ENCODE measurements at regions of chr15 and their contacts with region 1.

Region 1: GRCh38 chr15:90265271-90266060 is at the start of gene NGRN:
- DNase-seq: peak; percentile 96
- ATAC-seq: peak; percentile 90
- H3K4me3 Mint-ChIP-seq: peak within 1 kb of the TSS; percentile 96
- H3K27ac Mint-ChIP-seq: peak within 1 kb of the TSS; percentile 98
- H3K4me1 Mint-ChIP-seq: peaks cover 42% of the 10 kb centered on the region
- H3K27me3 Mint-ChIP-seq: no peaks in the 10 kb centered on the region
- total RNA-seq, gene NGRN: 29.7 to 29.8 TPM

Region 2: GRCh38 chr15:90131848-90132247 is 133.6 kb before region 1 on chr15:
- CTCF ChIA-PET with region 1: no interaction called
- POLR2A ChIA-PET with region 1: no interaction called
- DNase-seq: no peak
- ATAC-seq: no peak
- H3K4me3 Mint-ChIP-seq: no peak overlapping the region
- H3K27ac Mint-ChIP-seq: no peak overlapping the region
- H3K4me1 Mint-ChIP-seq: no peaks in the 10 kb centered on the region
- H3K27me3 Mint-ChIP-seq: peaks cover 20% of the 10 kb centered on the region

Region 3: GRCh38 chr15:90191794-90192509 is 73.5 kb before region 1 on chr15:
- CTCF ChIA-PET with region 1: no interaction called
- POLR2A ChIA-PET with region 1: no interaction called
- DNase-seq: peak; percentile 31
- ATAC-seq: peak; percentile 65
- H3K4me3 Mint-ChIP-seq: peak overlapping the region; percentile 60
- H3K27ac Mint-ChIP-seq: peak overlapping the region; percentile 78
- H3K4me1 Mint-ChIP-seq: peaks cover 34% of the 10 kb centered on the region
- H3K27me3 Mint-ChIP-seq: peaks cover 2% of the 10 kb centered on the region

Region 4: GRCh38 chr15:90249203-90249863 is 16.1 kb before region 1 on chr15 and contains the start of gene TTLL13:
- CTCF ChIA-PET with region 1: interaction called, 3 read pairs
- POLR2A ChIA-PET with region 1: interaction called, 11 read pairs
- DNase-seq: peak; percentile 71
- ATAC-seq: peak; percentile 81
- H3K4me3 Mint-ChIP-seq: peak within 1 kb of the TSS; percentile 65
- H3K27ac Mint-ChIP-seq: no peak within 1 kb of the TSS
- H3K4me1 Mint-ChIP-seq: peaks cover 16% of the 10 kb centered on the region
- H3K27me3 Mint-ChIP-seq: peaks cover 3% of the 10 kb centered on the region
- total RNA-seq, gene TTLL13: 1.3 TPM in 1 of 2 experiments, not detected in the other

Measured in activated CD8-positive, alpha-beta T cell treated with anti-CD3 and anti-CD28 coated beads, Interleukin-2, amount 10 ng/mL, durations not matched to agents 7 days and 5 days (primary cell).